PC-9 (cell line): ENCODE measurements at regions of chr11 and their contacts with region 1.

Region 1: DNA sequence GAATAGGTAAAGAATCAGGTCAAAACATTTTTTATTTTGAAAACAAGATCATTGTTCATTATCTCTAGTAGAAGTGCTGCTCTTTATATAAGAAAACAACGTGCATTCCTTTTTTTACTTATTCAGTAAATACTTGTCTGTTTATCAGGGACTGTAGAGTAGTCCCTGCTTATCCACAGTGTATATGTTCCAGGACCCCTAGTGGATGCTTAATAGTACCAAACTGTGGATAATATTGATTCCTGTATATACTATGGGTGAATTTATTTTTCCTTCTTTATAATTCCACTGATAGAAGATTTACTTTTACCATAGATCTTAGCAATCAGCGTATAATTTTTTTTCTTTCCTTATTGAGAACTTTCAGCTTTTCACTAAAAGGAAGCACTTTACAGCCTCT is 32.6 kb downstream of the CEP295 start:
- DNase-seq: no peak
- H3K4me3 ChIP-seq: no peak overlapping the region
- H3K27ac ChIP-seq: no peak overlapping the region
- H3K4me1 ChIP-seq: no peaks in the 10 kb centered on the region
- H3K27me3 ChIP-seq: no peaks in the 10 kb centered on the region
- CTCF ChIP-seq: peak; percentile 32; the same call in 1 of the 2 replicates

Region 2: DNA sequence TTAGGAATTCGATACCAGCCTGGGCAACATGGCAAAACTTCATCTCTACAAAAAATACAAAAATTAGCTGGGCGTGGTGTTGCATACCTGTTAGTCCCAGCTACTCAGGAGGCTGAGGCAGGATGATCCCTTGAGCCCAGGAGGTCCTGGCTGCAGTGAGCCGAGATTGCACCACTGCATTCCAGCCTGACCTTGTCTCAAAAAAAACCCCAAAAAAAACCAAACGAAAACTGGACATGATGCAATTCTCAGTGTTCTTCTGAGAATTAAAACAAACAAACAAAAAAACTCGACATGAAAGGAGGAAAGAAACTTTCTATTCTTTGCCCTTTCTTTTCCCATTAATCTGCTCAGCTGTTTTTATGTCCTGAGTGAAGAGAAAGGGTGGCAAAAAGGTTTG is 97.4 kb after region 1 on chr11:
- CTCF ChIA-PET with region 1: no interaction called
- POLR2A ChIA-PET with region 1: no interaction called
- intact Hi-C with region 1: loop called (anchors 10 kb)
- DNase-seq: no peak
- H3K4me3 ChIP-seq: no peak overlapping the region
- H3K27ac ChIP-seq: no peak overlapping the region
- H3K4me1 ChIP-seq: peaks cover 11% of the 10 kb centered on the region
- H3K27me3 ChIP-seq: no peaks in the 10 kb centered on the region
- CTCF ChIP-seq: no peak